ENCODE measurements at regions of chr18 and their contacts with region 1.

Region 1: GRCh38 chr18:9971313-9971920 is 57.6 kb downstream of the VAPA start:
- DNase-seq: peak; percentile 42
- H3K4me3 ChIP-seq: no peak overlapping the region
- H3K27ac ChIP-seq: no peak overlapping the region
- H3K27me3 ChIP-seq: peaks cover 2% of the 10 kb centered on the region
- CTCF ChIP-seq: peak; percentile 75

Region 2: DNA sequence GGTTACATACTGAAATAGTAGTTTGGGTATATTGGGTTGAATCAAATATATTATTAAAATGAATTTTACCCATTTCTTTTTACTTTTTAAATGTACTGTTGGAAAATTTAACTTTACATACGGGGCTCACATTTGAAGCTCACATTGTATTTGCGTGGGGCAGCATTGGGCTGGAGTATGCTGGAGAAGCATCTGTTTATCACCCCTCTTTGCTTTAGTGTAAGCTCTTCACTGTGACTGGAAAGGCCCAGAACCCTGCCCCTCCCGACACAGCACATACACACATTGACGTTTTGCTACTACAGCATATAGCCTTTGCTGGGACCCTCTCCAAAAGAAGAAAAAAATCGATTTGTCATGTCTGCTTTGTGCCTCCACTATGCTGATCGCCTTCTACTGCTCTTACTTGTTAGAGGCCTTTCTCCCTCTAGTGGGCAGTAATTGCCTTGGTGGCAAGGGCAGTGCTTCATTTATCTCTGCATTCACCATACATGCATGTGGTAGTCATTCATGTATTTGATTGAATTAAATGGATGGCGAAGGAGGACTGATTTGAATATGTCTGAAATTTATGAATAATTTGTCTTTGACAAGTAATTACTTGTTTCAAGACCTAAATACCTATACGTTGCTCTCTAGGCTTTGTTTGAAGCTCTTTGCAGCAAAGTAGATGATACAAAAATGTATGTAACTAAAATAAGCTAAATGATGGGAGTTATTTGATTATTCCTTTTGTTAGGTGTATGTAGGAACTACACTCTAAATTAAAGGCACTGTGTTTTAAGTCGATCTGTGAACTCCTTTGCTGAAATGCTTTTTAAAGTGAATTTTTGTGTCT is 20.2 kb before region 1 on chr18:
- CTCF ChIA-PET with region 1: no interaction called
- POLR2A ChIA-PET with region 1: no interaction called
- DNase-seq: peak; percentile 43
- H3K4me3 ChIP-seq: no peak overlapping the region
- H3K27ac ChIP-seq: no peak overlapping the region
- H3K27me3 ChIP-seq: no peaks in the 10 kb centered on the region
- CTCF ChIP-seq: peak; percentile 86

Region 3: GRCh38 chr18:10519999-10520935 is 548.9 kb after region 1 on chr18:
- CTCF ChIA-PET with region 1: interaction called, 198 read pairs
- POLR2A ChIA-PET with region 1: interaction called, 3 read pairs
- DNase-seq: peak; percentile 77
- H3K4me3 ChIP-seq: no peak overlapping the region
- H3K27ac ChIP-seq: no peak overlapping the region
- H3K27me3 ChIP-seq: peaks cover 30% of the 10 kb centered on the region
- CTCF ChIP-seq: peak; percentile 89

Region 4: DNA sequence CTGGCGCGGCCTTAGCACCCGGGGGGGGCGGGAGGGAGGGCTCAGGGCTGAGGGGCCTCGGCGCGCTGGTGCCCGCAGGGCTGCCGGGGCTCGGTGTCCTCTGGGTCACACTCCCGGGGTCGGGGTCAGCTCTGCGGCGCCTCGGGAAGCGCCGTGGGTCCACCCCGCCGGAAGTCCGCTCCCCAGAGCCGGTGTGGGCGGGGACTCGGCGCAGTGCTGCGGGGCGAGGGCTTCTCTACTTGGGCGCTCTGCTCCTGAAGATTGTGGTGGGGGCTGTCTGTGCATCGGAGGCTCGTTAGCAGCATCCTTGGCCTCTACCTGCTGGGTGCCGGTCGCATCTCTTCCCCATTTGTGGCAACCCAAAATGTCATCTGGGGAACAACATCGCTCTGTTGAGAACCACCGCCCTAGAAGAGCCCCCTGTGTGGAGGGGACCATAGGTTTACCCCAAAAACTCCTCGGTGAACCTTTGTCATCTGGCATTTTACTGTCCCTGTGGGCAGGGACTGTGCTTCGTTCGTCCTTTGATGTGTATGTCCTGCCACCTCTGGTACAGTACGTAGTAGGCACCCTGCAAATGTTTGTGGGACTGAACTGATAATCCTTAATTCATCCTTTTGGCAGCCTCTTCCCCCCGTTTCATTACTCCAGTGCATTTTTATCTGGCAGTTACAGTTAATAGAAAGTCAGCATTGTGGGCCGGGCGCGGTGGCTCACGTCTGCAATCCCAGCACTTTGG is 555.0 kb after region 1 on chr18:
- CTCF ChIA-PET with region 1: interaction called, 32 read pairs
- POLR2A ChIA-PET with region 1: no interaction called
- DNase-seq: no peak
- H3K4me3 ChIP-seq: peak overlapping the region; percentile 66
- H3K27ac ChIP-seq: peak overlapping the region; percentile 84
- H3K27me3 ChIP-seq: peaks cover 10% of the 10 kb centered on the region
- CTCF ChIP-seq: no peak